Psoas muscle (tissue), 8 donors: ENCODE measurements at regions of chr1 and their contacts with region 1.

Region 1: GRCh38 chr1:243343970-243344937 is 88.4 kb downstream of the SDCCAG8 start:
- DNase-seq: no peak
- ATAC-seq: peak; percentile 40 to 76 (median 56)
- H3K4me3 ChIP-seq: no peak overlapping the region
- H3K27ac ChIP-seq: no peak overlapping the region
- H3K4me1 ChIP-seq: no peaks in the 10 kb centered on the region
- H3K27me3 ChIP-seq: no peaks in the 10 kb centered on the region
- CTCF ChIP-seq: peak; percentile 75

Region 2: DNA sequence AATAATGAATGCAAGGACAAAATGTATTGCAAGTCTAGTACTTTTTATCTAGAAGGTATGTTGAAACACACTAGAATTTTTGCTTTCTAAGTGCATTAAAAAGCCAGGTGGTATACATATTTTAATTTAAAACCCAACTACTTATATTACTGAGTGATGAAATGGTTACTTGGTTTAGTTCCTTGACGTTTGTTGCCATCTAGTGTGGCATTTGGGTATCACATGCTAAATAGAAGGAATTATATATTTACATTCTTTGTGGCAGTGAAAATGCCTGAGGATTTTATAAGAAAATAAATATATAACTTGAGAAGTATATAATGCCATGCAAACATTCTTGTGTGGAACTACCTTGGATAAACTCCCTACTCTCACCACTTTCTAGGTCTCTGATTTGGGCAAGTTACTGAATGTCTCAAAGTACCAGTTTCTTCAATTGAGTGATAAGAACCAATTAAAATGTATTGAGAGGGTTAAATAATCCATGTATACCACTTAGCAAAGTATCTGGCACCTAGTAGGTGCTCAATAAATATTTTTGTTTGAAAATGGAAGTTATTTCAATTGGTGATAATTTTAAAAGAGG is 18.9 kb before region 1 on chr1:
- intact Hi-C with region 1: no loop called
- DNase-seq: no peak
- ATAC-seq: peak in 2 of 4 donors; percentile 59 to 73
- H3K4me3 ChIP-seq: no peak overlapping the region
- H3K27ac ChIP-seq: no peak overlapping the region
- H3K4me1 ChIP-seq: no peaks in the 10 kb centered on the region
- H3K27me3 ChIP-seq: no peaks in the 10 kb centered on the region
- CTCF ChIP-seq: peak; percentile 86

Region 3: DNA sequence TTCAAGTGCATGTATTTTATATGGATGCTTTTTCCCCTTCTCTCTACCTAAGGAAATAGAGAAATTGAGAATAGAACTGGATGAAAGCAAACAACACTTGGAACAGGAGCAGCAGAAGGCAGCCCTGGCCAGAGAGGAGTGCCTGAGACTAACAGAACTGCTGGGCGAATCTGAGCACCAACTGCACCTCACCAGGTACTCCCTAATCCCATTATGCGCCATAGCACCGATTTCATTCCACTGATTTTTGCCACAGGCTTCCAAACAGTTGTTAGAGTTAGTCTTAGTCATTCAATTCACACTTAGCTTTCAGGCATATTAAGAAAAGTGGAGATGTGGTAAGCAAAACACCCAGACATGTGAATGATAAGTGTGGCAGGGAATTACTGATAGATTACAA is 34.4 kb after region 1 on chr1:
- intact Hi-C with region 1: loop called in 1 of 2 experiments (anchors 2 kb)
- DNase-seq: no peak
- ATAC-seq: no peak
- H3K4me3 ChIP-seq: no peak overlapping the region
- H3K27ac ChIP-seq: no peak overlapping the region
- H3K4me1 ChIP-seq: peaks cover 4% of the 10 kb centered on the region
- H3K27me3 ChIP-seq: no peaks in the 10 kb centered on the region
- CTCF ChIP-seq: no peak

Region 4: DNA sequence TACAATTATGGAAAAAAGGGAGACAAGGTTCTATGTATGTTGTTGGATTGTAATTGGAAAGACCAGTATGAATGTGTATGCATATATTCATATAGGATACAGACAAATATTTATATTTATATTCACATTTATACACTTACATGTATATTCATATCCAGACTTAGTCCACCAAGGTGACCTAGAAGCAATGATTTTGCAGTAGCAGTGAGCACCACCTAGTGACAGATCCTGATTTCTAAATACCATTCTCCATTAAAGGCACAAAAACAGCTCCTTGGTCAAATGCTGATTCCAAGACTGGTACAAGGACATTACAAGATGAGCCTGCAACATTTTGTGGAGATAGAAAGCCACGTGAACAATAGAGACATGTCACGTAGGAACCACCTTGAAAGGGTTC is 65.0 kb after region 1 on chr1:
- intact Hi-C with region 1: loop called in 1 of 2 experiments (anchors 2 kb)
- DNase-seq: no peak
- ATAC-seq: peak in 2 of 4 donors; percentile 44 to 54
- H3K4me3 ChIP-seq: no peak overlapping the region
- H3K27ac ChIP-seq: no peak overlapping the region
- H3K4me1 ChIP-seq: no peaks in the 10 kb centered on the region
- H3K27me3 ChIP-seq: no peaks in the 10 kb centered on the region
- CTCF ChIP-seq: peak; percentile 48

Region 5: GRCh38 chr1:243748706-243749283 is 404.5 kb after region 1 on chr1:
- intact Hi-C with region 1: loop called (anchors 5 to 10 kb)
- DNase-seq: no peak
- ATAC-seq: peak; percentile 76 to 92 (median 84)
- H3K4me3 ChIP-seq: no peak overlapping the region
- H3K27ac ChIP-seq: no peak overlapping the region
- H3K4me1 ChIP-seq: no peaks in the 10 kb centered on the region
- H3K27me3 ChIP-seq: no peaks in the 10 kb centered on the region
- CTCF ChIP-seq: peak; percentile 86

Region 6: DNA sequence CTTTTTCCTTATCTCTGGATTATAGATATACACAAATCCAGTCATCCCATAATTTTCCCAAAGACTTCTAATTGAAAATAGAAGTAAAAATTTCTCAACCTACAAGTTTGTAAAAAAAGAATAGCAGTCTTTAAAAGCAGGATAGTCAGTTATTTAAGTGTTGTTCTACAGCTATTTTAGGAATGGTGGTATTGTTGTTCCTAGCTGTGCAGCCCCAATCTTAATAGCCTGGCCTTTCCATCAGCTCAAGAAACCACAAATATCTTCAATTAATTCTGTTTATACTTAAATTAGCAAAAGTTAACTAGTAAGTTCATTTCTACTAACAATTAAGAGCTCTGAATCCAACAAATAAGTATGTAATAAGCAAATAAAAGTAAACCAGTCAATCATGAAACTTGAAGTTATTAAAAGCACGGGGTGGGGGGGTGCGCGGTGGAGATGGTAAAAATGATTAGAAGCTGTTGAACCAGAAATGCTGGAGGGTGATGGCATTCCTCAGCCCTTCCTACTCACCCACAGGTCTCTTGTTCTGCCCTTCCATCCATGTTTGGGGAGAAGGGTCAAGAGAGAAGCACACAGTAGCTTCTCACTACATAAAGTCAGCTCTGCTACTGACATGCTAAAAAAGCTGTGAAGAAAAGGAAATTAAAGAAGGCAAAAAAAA is 442.1 kb after region 1 on chr1:
- intact Hi-C with region 1: no loop called
- DNase-seq: no peak
- ATAC-seq: no peak
- H3K4me3 ChIP-seq: no peak overlapping the region
- H3K27ac ChIP-seq: no peak overlapping the region
- H3K4me1 ChIP-seq: peaks cover 16% of the 10 kb centered on the region
- H3K27me3 ChIP-seq: no peaks in the 10 kb centered on the region
- CTCF ChIP-seq: no peak